Thyroid gland (tissue), 4 donors: ENCODE measurements at regions of chr1 and their contacts with region 1.

Region 1: DNA sequence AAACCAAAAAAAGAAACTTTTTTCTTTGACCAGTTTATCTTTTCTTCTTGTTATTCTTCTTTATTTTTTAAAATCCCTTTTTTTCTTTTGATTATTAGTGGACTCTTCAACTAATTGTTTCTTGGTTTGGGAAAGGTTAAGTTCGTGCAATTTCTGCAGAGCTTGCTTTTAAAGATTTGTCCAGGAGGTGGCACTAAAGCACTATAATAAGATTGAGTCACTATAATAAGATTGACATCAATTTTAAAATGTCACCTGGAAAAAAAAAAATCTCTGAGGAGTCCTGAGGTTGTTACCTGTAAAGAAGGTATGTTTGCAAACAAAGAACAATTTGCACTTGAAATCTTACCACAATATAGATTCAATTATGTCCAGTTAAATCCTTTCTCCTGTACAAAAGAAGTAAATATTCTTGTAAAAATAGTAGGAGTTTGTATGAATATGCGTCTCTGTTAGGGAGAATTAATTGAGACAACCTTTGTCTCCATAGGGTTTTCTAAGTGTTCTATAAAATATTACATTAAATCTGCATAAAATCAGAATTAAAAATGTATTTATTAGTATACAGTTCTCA is 166.7 kb downstream of the ADGRL4 start:
- DNase-seq: peak; percentile 7 to 12
- H3K4me3 ChIP-seq: no peak overlapping the region
- H3K27ac ChIP-seq: no peak overlapping the region
- H3K4me1 ChIP-seq: peaks cover 0 to 6% of the 10 kb centered on the region in 2 donors
- H3K27me3 ChIP-seq: no peaks in the 10 kb centered on the region
- CTCF ChIP-seq: peak in 4 of 6 experiments; percentile 33 to 65 (median 60)
- POLR2A ChIP-seq: no peak

Region 2: GRCh38 chr1:78787542-78787941 is 52.2 kb before region 1 on chr1:
- intact Hi-C with region 1: no loop called
- DNase-seq: no peak
- H3K4me3 ChIP-seq: no peak overlapping the region
- H3K27ac ChIP-seq: no peak overlapping the region
- H3K4me1 ChIP-seq: no peaks in the 10 kb centered on the region
- H3K27me3 ChIP-seq: no peaks in the 10 kb centered on the region
- CTCF ChIP-seq: no peak
- POLR2A ChIP-seq: no peak

Region 3: GRCh38 chr1:78980511-78980910 is 140.7 kb after region 1 on chr1:
- intact Hi-C with region 1: no loop called
- DNase-seq: no peak
- H3K4me3 ChIP-seq: no peak overlapping the region
- H3K27ac ChIP-seq: no peak overlapping the region
- H3K4me1 ChIP-seq: no peaks in the 10 kb centered on the region
- H3K27me3 ChIP-seq: no peaks in the 10 kb centered on the region
- CTCF ChIP-seq: no peak
- POLR2A ChIP-seq: no peak

Region 4: GRCh38 chr1:79353224-79353623 is 513.4 kb after region 1 on chr1:
- intact Hi-C with region 1: loop called (anchors 5 kb)
- DNase-seq: peak; percentile 14 to 38
- H3K4me3 ChIP-seq: no peak overlapping the region
- H3K27ac ChIP-seq: no peak overlapping the region
- H3K4me1 ChIP-seq: no peaks in the 10 kb centered on the region
- H3K27me3 ChIP-seq: no peaks in the 10 kb centered on the region
- CTCF ChIP-seq: peak in 3 of 6 experiments; percentile 41 to 49 (median 48)
- POLR2A ChIP-seq: no peak